ENCODE measurements at regions of chr15 and their contacts with region 1.

Region 1: GRCh38 chr15:74540761-74541493 is at the start of gene ARID3B:
- DNase-seq: peak; percentile 97
- ATAC-seq: peak; percentile 99
- total RNA-seq, gene ARID3B: 5.5 TPM

Region 2: GRCh38 chr15:74615508-74616365 is 74.8 kb after region 1 on chr15 and contains the start of gene CLK3:
- intact Hi-C with region 1: loop called (anchors 5 kb)
- DNase-seq: peak; percentile 99
- ATAC-seq: peak; percentile 90
- total RNA-seq, gene CLK3: 81.7 TPM